Sciatic nerve (tissue), 2 donors: ENCODE measurements at regions of chr2 and their contacts with region 1.

Region 1: GRCh38 chr2:116879650-116880160 is 934.8 kb upstream of the DDX18 start:
- DNase-seq: no peak
- ATAC-seq: no peak

Region 2: GRCh38 chr2:118061135-118061955 is 1181.6 kb after region 1 on chr2:
- intact Hi-C with region 1: loop called (anchors 10 kb)
- DNase-seq: no peak
- ATAC-seq: peak; percentile 72